ENCODE measurements at regions of chr3 and their contacts with region 1.

Region 1: GRCh38 chr3:15205934-15206661 is at the start of gene CAPN7:
- DNase-seq: peak; percentile 93
- H3K4me3 Mint-ChIP-seq: peak within 1 kb of the TSS; percentile 81
- H3K27ac Mint-ChIP-seq: peak within 1 kb of the TSS; percentile 91
- H3K4me1 Mint-ChIP-seq: peaks cover 13% of the 10 kb centered on the region
- H3K27me3 Mint-ChIP-seq: no peaks in the 10 kb centered on the region
- CTCF ChIP-seq: no peak
- total RNA-seq, gene CAPN7: 48.4 and 55.2 TPM in 2 replicates

Region 2: GRCh38 chr3:15064835-15065549 is 141.1 kb before region 1 on chr3 and contains the start of gene MRPS25:
- CTCF ChIA-PET with region 1: interaction called, 3 read pairs
- POLR2A ChIA-PET with region 1: interaction called, 22 read pairs
- intact Hi-C with region 1: no loop called
- DNase-seq: peak; percentile 90
- H3K4me3 Mint-ChIP-seq: peak within 1 kb of the TSS; percentile 80
- H3K27ac Mint-ChIP-seq: peak within 1 kb of the TSS; percentile 93
- H3K4me1 Mint-ChIP-seq: peaks cover 10% of the 10 kb centered on the region
- H3K27me3 Mint-ChIP-seq: no peaks in the 10 kb centered on the region
- CTCF ChIP-seq: no peak
- total RNA-seq, gene MRPS25: 81.0 and 87.2 TPM in 2 replicates

Region 3: DNA sequence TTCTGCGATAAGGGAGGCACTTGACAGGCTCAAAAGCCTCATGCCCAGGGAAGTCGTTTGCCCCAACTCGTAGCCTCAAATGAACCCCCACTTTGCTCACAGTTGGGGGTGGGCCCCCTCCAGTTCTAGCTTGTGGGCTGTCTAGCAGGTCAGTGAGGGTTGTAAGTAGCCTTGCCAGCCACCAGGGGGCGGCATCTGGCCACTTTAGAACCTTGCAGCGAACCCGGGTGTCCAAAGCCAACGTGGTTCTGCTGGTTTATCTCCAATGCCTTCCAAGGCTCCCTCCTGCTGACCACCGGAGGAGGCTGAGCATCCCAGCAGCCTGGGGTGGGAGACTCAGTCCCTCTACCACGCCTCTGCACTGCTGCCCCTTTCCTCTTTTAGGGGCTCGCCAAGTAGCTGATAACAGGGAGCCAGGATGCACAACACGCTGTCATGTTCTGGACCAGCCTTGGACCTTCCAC is 98.0 kb before region 1 on chr3:
- CTCF ChIA-PET with region 1: interaction called, 121 read pairs
- POLR2A ChIA-PET with region 1: interaction called, 42 read pairs
- intact Hi-C with region 1: loop called (anchors 2 kb)
- DNase-seq: peak; percentile 75
- H3K4me3 Mint-ChIP-seq: no peak overlapping the region
- H3K27ac Mint-ChIP-seq: no peak overlapping the region
- H3K4me1 Mint-ChIP-seq: peaks cover 19% of the 10 kb centered on the region
- H3K27me3 Mint-ChIP-seq: no peaks in the 10 kb centered on the region
- CTCF ChIP-seq: peak; percentile 94

Region 4: GRCh38 chr3:15217841-15218267 is 11.8 kb after region 1 on chr3:
- CTCF ChIA-PET with region 1: interaction called, 18 read pairs
- POLR2A ChIA-PET with region 1: interaction called, 14 read pairs
- intact Hi-C with region 1: no loop called
- DNase-seq: no peak
- H3K4me3 Mint-ChIP-seq: no peak overlapping the region
- H3K27ac Mint-ChIP-seq: no peak overlapping the region
- H3K4me1 Mint-ChIP-seq: no peaks in the 10 kb centered on the region
- H3K27me3 Mint-ChIP-seq: no peaks in the 10 kb centered on the region
- CTCF ChIP-seq: no peak

Region 5: DNA sequence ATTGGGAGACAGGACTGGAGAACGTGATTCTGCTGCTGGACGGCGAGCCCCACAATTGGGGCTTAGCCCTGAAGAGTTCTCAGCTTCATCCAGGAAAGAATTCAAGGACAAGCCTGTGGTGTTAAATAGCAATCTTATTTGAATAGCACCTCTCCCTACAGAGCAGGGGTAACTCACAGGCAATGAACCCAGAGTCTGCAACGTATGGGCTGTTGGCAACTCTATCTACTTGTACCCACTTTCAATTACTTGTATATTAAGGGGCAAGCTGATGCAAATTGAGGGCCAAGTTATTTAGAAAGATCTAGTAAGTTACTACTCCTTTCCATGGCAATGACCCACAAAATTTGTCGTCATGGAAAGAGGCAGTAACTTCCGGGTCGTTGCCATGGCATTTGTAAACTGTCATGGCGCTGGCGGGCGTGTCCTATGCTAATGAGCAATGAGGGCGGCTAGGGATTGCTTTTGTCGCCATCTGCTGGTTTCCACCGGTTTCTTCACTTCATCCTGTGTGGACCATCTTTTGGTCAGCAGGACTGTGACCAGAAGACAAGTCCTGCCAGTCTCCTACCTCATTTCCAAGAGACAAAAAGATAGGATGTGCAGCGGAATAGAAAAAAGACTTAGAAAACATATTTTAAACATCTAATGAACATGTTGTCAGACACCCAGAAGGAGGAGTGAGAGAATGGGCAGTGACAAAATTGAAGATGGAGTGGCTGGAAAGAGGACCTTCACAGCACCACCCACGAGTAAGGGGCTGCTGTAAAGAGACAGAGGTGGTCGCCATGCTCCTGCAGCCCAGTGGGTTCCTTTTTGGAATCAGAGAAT is 172.1 kb after region 1 on chr3:
- CTCF ChIA-PET with region 1: interaction called, 7 read pairs
- POLR2A ChIA-PET with region 1: interaction called, 3 read pairs
- intact Hi-C with region 1: loop called (anchors 10 kb)
- DNase-seq: peak; percentile 96
- H3K4me3 Mint-ChIP-seq: no peak overlapping the region
- H3K27ac Mint-ChIP-seq: no peak overlapping the region
- H3K4me1 Mint-ChIP-seq: no peaks in the 10 kb centered on the region
- H3K27me3 Mint-ChIP-seq: no peaks in the 10 kb centered on the region
- CTCF ChIP-seq: peak; percentile 86

Region 6: DNA sequence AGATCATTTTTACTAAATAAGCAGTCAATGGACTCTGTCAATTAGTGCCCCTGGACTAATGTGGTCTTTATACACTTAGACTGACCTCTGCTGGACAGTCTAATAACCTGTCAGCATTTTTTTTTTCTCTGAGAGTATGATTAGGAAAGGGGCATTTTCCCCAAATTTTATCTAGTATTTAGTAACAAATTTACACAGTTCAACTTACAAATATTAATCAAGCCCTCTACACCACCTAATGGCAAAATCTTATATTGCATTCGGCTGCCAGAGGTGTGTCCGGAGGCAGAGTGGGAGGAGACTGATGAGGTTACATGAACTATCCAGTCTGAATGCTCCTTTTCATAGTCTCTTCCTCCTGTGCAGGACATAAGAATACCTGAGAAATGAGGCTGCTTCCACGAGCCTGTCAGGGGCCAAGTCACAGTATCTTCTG is 351.4 kb after region 1 on chr3:
- CTCF ChIA-PET with region 1: interaction called, 28 read pairs
- POLR2A ChIA-PET with region 1: no interaction called
- intact Hi-C with region 1: loop called (anchors 1 kb)
- DNase-seq: peak; percentile 82
- H3K4me3 Mint-ChIP-seq: no peak overlapping the region
- H3K27ac Mint-ChIP-seq: no peak overlapping the region
- H3K4me1 Mint-ChIP-seq: peaks cover 5% of the 10 kb centered on the region
- H3K27me3 Mint-ChIP-seq: no peaks in the 10 kb centered on the region
- CTCF ChIP-seq: peak; percentile 66

Region 7: DNA sequence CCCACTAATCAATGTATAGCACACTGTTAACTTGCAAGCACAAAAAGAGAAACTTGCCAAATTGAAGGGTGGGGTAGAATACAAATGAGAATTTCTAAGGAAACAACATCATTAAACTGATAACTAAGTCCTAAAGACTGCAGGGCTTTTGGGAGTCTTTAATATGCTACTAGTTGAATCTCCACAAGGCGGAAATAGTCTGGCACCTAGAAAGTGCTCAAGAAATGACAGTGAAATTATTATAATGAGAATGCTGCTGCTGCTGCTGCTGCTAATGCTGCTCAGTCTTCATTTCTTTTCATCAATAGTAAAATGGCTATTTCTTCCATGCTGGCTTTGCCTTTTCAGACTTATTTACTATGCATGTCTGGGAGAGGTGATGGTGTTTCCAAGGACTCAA is 487.3 kb after region 1 on chr3:
- CTCF ChIA-PET with region 1: no interaction called
- POLR2A ChIA-PET with region 1: no interaction called
- intact Hi-C with region 1: no loop called
- DNase-seq: peak; percentile 4
- H3K4me3 Mint-ChIP-seq: no peak overlapping the region
- H3K27ac Mint-ChIP-seq: peak overlapping the region; percentile 46
- H3K4me1 Mint-ChIP-seq: no peaks in the 10 kb centered on the region
- H3K27me3 Mint-ChIP-seq: no peaks in the 10 kb centered on the region
- CTCF ChIP-seq: peak; percentile 10

Region 8: GRCh38 chr3:16247276-16248061 is 1041.4 kb after region 1 on chr3:
- CTCF ChIA-PET with region 1: interaction called, 3 read pairs
- POLR2A ChIA-PET with region 1: no interaction called
- intact Hi-C with region 1: loop called (anchors 5 kb)
- DNase-seq: peak; percentile 89
- H3K4me3 Mint-ChIP-seq: no peak overlapping the region
- H3K27ac Mint-ChIP-seq: no peak overlapping the region
- H3K4me1 Mint-ChIP-seq: peaks cover 32% of the 10 kb centered on the region
- H3K27me3 Mint-ChIP-seq: no peaks in the 10 kb centered on the region
- CTCF ChIP-seq: peak; percentile 95

Measured in MCF 10A (cell line).